Sigmoid colon (tissue), 7 donors: ENCODE measurements at regions of chr2 and their contacts with region 1.

Region 1: DNA sequence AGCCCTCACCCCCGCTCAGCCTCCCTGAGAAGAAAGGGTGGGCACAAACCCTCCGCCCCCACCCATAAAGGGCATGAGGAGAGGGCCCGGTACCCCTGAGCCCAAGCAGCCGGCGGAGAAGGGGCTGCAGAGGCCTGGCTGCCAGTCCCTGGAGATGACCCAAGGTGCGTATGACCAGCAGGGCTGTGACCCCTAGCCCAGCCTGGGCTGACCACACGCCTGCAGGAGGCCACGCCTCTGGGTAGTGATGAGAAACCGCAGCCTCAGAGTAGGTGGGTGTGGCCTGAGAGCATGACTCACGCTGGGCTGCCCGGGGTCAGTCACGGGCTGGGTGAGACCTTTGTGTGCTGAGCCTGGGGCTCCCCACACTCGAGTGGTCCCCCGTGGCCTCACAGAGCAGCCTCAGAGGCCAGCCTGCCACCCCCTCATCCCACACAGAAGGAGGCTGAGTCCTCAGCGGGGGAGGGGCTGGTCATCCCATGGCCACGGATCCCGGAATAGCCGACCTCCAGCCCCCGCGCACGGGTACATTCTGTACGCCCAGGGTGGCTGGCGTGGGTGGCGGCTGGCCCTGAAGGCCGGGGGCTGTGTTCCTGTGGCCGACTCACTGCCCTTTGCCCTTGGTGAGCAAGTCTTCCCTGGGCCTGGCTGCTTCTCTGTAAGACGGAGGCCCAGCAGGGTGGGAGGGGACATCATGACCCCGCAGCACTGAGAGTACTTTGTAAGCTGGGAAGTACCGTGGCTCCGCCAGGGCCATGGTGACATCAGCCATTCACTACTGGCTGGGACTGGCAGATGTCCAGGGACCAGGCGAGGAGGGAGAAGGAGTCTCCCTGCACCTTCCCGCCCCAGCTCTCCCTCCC is 110.8 kb upstream of the OTOS start:
- DNase-seq: peak; percentile 95
- H3K4me3 ChIP-seq: peak overlapping the region in 3 of 4 donors; percentile 8 to 17 (median 9)
- H3K27ac ChIP-seq: peak overlapping the region; percentile 70 to 80 (median 76)
- H3K4me1 ChIP-seq: peaks cover 0 to 24% (median 19%) of the 10 kb centered on the region in 4 donors
- H3K27me3 ChIP-seq: no peaks in the 10 kb centered on the region
- CTCF ChIP-seq: no peak
- EP300 ChIP-seq: peak in 3 of 4 donors; percentile 6 to 87 (median 80)
- POLR2A ChIP-seq: no peak

Region 2: DNA sequence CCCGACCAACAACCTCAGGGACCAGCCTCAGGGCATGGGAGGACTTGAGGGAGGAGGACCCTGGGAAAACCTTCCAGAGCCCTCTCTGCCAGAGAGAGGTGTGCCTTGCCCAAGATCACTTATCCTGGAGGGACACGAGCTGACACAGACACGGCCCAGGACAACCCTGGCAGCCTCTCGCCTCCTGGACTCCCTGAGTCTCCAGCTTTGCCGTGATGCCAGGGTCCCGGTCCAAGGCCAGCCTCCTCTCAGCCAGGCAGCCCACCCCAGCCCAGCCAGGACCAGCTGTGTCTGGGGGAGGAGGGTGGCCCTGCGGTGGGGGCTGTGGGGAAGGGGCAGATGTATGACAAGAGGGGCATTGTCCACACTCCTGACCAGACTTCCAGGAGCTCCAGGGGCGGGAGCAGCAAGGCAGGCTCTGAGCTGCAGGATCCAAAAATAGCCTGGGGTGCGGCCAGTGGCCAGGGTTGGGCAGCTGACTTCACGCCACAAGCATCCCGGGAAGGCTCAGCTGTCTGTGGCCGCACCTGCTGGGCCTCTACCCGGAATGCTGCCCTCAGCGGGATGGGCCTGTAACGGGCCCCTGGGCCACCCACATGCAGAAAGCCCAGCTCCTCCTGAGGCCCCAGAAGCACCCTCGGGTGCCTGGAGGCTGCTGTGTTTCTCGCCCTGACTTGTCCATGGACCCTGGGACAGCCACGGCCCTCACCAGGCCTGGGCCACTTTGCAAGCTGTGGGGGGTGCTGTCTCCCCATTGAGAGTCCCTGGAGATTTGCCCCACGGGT is 118.8 kb after region 1 on chr2:
- intact Hi-C with region 1: loop called (anchors 5 kb)
- DNase-seq: peak; percentile 86
- H3K4me3 ChIP-seq: no peak overlapping the region
- H3K27ac ChIP-seq: peak overlapping the region; percentile 74 to 88 (median 83)
- H3K4me1 ChIP-seq: peaks cover 0 to 73% (median 42%) of the 10 kb centered on the region in 4 donors
- H3K27me3 ChIP-seq: no peaks in the 10 kb centered on the region
- CTCF ChIP-seq: no peak
- EP300 ChIP-seq: peak in 1 of 4 donors; percentile 60
- POLR2A ChIP-seq: no peak